ENCODE measurements at regions of chr4 and their contacts with region 1.

Region 1: DNA sequence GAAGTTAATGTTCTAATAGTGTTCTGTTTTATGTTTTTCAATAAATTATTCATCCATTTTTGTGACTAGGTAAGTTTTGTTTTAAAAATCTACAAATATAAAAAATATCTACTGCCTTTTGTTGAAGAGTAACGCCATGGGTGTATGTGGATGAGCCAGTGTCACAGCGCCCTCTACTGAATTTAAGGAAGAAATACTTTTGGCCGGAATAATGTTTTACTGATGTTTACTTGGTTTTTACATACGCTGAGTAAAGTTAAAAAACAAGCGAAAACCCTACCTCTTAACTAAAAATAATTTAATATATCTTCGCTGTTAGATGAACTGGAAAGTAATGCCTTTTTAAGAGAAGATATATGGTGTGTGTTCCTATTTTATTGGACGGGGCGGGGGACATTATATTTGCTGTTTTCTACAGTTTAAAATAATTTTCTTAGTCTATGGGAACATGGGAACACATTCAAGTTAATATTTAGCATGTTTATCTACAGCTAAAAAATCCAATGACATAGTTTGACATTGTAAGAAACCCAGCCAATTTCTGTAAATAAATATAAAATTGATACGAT is 86.1 kb downstream of the CPE start:
- DNase-seq: no peak
- H3K4me3 ChIP-seq: no peak overlapping the region
- H3K27ac ChIP-seq: peak overlapping the region in 1 of 2 donors; percentile 82
- H3K4me1 ChIP-seq: no peaks in the 10 kb centered on the region
- H3K27me3 ChIP-seq: no peaks in the 10 kb centered on the region
- CTCF ChIP-seq: peak; percentile 66 to 89 (median 82)
- POLR2A ChIP-seq: no peak

Region 2: DNA sequence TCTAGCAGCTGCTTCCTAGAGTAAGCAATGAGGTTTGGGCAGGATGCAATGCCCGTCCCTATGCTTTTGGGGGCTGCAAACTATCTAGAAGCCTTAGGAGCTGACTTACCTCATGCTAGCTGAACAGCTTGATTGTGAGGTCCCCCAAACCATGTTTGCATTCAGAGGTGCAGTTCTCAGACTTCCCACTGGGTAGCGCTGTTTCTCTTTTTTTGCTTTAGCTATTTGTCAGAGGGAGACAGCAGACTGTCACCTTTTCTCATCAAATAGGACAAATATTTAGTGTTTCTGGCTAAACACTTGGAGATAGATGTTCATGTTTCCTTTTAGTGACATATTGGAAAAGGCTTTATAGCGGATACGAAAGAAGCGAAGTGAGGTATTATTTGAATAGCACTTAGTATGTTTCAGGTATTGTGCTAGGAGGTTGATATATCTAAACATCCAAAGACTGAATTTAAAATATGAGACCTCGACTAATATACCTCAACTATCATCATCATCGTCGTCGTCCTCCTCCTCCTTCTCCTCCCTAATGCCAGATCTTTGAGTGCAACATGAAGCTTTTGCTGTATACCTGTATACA is 333.6 kb before region 1 on chr4:
- intact Hi-C with region 1: loop called (anchors 5 kb)
- DNase-seq: peak; percentile 60
- H3K4me3 ChIP-seq: no peak overlapping the region
- H3K27ac ChIP-seq: no peak overlapping the region
- H3K4me1 ChIP-seq: no peaks in the 10 kb centered on the region
- H3K27me3 ChIP-seq: no peaks in the 10 kb centered on the region
- CTCF ChIP-seq: peak; percentile 69 to 91 (median 90)
- POLR2A ChIP-seq: no peak

Region 3: DNA sequence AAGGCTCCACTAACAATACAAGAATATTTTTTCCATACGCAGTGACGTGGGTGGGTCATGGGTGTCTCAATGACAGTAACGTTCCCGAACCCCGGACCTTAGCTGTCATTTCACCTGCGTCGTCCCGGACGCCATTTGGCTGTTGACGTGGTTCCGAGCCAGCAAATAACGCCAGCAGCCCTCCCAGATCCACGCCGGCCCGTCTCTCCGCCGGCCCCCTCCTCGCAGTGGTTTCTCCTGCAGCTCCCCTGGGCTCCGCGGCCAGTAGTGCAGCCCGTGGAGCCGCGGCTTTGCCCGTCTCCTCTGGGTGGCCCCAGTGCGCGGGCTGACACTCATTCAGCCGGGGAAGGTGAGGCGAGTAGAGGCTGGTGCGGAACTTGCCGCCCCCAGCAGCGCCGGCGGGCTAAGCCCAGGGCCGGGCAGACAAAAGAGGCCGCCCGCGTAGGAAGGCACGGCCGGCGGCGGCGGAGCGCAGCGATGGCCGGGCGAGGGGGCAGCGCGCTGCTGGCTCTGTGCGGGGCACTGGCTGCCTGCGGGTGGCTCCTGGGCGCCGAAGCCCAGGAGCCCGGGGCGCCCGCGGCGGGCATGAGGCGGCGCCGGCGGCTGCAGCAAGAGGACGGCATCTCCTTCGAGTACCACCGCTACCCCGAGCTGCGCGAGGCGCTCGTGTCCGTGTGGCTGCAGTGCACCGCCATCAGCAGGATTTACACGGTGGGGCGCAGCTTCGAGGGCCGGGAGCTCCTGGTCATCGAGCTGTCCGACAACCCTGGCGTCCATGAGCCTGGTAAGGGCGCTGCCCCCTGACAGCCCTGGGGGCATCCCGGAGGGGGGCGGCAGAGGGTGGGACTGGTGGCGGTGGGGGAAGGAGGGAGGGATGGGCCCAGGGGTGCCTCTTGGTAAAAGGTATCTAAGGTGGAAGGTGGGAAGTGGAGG is 85.9 kb before region 1 on chr4 and contains the start of gene CPE:
- intact Hi-C with region 1: loop called (anchors 10 kb)
- DNase-seq: peak; percentile 80
- H3K4me3 ChIP-seq: peak within 1 kb of the TSS; percentile 52 to 58
- H3K27ac ChIP-seq: peak within 1 kb of the TSS; percentile 79 to 93
- H3K4me1 ChIP-seq: no peaks in the 10 kb centered on the region
- H3K27me3 ChIP-seq: no peaks in the 10 kb centered on the region
- CTCF ChIP-seq: peak in 3 of 4 experiments; percentile 21 to 81 (median 72)
- POLR2A ChIP-seq: peak; percentile 61
- total RNA-seq, gene CPE: 717 to 885 TPM

Region 4: DNA sequence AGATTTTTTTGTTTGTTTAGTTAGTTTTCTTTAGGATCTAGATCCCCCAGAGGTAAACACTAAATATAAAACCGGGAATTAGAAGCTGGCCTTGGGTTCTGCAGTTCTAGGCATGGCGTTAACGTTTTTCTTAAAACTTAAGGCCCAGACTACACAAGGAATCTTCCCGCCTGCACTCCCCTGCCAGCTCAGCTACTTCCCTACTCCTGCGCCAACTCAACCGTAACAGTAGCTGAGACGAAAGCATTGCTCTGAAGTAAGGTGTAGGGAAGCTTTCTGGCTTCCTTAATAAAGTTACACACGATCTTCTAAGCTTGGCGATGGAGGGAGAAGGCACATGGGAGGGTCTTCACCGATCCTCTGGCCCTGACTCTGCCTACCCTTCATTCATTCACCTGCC is 49.0 kb before region 1 on chr4:
- intact Hi-C with region 1: no loop called
- DNase-seq: no peak
- H3K4me3 ChIP-seq: no peak overlapping the region
- H3K27ac ChIP-seq: no peak overlapping the region
- H3K4me1 ChIP-seq: no peaks in the 10 kb centered on the region
- H3K27me3 ChIP-seq: no peaks in the 10 kb centered on the region
- CTCF ChIP-seq: no peak
- POLR2A ChIP-seq: no peak

Region 5: GRCh38 chr4:165512424-165512823 is 47.5 kb after region 1 on chr4:
- intact Hi-C with region 1: no loop called
- DNase-seq: no peak
- H3K4me3 ChIP-seq: no peak overlapping the region
- H3K27ac ChIP-seq: no peak overlapping the region
- H3K4me1 ChIP-seq: no peaks in the 10 kb centered on the region
- H3K27me3 ChIP-seq: no peaks in the 10 kb centered on the region
- CTCF ChIP-seq: no peak
- POLR2A ChIP-seq: no peak